Activated B cell treated with CpG ODN at 0.5 μM for 24 hours (primary cell): ENCODE measurements at regions of chr4 and their contacts with region 1.

Region 1: DNA sequence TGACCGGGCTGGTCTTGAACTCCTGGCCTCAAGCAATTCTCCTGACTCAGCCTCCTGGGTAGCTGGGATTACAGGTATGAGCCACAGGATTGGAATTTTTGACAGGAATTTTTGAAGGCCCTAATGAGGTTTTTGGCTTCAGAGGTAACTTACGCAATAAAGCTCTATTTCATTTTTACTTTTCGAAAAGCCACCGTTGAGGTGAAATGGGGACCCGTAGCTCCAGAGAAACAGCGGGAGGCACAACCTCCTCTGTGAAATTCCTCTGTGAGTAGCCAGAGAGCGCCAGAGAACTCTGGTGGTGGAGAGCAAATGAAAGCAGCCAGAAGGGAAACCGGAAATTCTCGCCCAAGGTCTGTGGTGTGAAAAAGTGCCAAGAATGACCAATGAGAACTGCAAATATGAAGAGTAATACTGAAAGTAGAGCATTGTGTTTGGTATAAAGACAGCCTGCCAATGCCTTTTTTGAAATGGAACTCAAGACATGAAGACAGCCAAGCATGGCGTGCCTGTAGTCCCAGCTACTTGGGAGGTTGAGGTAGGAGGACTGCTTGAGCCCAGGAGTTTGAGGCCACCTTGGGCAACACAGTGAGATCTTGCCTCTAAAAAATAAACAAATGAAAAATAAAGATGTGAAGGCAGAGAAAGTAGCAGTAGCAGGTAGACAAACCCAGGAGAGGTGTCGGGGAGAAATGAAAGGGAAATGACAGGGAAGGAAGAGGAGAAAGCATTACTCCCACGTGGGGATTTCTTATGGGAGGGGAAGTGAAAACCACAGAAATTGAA is 33.0 kb upstream of the TMEM131L start:
- DNase-seq: no peak
- ATAC-seq: peak; percentile 86
- H3K4me3 Mint-ChIP-seq: peak overlapping the region; percentile 80
- H3K27ac Mint-ChIP-seq: peak overlapping the region; percentile 93
- H3K4me1 Mint-ChIP-seq: peaks cover 71% of the 10 kb centered on the region
- H3K27me3 Mint-ChIP-seq: no peaks in the 10 kb centered on the region
- CTCF ChIP-seq: peak; percentile 35

Region 2: DNA sequence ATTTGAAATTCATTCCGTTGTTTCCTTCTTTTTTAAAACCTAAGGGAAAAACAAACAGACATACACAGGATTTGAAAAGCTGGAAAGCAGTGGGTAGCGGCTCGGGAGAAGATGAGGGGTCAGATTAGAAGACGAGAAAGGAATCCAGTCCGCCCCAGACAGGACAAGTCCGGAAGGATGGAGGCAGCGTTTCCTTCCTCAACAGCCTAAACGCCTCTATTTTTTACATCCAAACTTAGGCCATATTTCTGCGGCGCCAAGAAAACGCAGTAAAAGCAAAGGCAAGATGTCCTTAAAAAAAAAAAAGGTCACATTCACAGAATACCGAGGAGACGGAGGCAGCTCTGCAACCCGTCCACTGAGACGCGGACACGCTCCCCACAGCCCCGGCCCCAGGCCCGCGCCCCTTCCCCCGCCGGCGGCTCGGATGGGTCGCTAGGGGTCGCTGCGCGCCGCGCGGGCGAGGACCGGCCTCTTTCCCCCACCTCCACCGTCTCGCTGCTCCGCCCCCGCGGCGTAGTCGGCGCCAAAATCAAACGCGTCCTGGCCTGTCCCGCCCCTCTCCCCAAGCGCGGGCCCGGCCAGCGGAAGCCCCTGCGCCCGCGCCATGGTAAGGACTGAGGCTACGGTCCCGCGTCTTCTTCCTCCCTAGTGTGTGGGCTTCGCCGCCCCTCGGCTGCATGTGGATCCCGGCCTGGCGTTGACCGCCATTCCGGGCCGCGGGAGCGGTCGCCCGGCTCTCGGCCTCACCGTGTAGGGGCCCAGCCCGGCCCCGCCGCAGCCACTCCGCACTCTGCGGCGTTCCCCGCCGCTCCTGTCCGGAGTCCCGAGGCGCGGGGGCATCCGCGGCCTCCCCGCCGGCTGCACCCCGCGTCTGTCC is 88.8 kb before region 1 on chr4 and contains the start of gene MND1:
- CTCF ChIA-PET with region 1: interaction called, 4 read pairs
- POLR2A ChIA-PET with region 1: no interaction called
- intact Hi-C with region 1: loop called (anchors 1 kb)
- DNase-seq: peak; percentile 91
- ATAC-seq: peak; percentile 93
- H3K4me3 Mint-ChIP-seq: peak within 1 kb of the TSS; percentile 94
- H3K27ac Mint-ChIP-seq: no peak within 1 kb of the TSS
- H3K4me1 Mint-ChIP-seq: peaks cover 44% of the 10 kb centered on the region
- H3K27me3 Mint-ChIP-seq: no peaks in the 10 kb centered on the region
- CTCF ChIP-seq: peak; percentile 72
- total RNA-seq, gene MND1: 0.27 and 0.53 TPM in 2 replicates

Region 3: GRCh38 chr4:153488006-153488891 is 55.1 kb after region 1 on chr4:
- CTCF ChIA-PET with region 1: interaction called, 6 read pairs
- POLR2A ChIA-PET with region 1: interaction called, 7 read pairs
- intact Hi-C with region 1: loop called (anchors 1 kb)
- DNase-seq: peak; percentile 62
- ATAC-seq: peak; percentile 76
- H3K4me3 Mint-ChIP-seq: peak overlapping the region; percentile 78
- H3K27ac Mint-ChIP-seq: peak overlapping the region; percentile 92
- H3K4me1 Mint-ChIP-seq: peaks cover 89% of the 10 kb centered on the region
- H3K27me3 Mint-ChIP-seq: no peaks in the 10 kb centered on the region
- CTCF ChIP-seq: no peak

Region 4: DNA sequence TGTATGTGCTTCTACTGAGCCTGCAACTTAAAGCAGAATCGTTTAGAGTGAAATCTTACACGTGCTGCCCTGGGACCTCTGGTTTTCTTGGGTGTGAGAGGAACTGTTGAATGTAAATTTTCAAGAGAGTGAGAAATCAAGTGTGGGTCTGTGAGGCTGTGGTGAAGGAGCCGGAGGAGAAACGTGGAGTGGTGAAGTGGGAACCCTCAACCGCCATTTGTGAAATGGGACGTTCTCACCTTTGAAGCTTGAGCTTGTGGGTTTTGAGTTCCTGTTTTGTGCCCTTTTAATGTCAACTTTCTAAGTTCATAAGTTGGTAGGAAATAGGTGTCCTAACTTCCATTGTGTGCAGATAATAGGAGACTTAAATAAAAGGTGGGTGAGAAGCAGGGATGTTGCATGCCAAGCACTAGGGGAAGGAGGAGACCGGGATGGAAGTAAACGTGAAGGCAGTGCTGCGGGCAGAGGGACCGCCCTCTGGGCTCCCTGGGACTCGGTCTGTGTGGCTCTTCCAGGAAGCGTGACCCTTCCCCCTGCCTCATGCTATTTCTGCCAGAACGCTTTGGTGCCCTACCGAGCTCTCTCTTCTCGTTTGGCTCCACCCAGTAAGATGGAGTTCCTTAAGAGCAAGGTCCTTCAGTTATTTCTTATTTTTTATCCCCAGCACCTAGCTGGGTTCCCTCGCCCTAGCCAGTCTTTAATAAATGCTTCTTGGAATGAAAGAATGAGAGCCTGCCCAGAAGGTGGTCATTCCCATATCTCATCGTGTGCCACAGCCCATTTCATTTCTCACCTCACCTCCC is 89.0 kb after region 1 on chr4:
- CTCF ChIA-PET with region 1: interaction called, 6 read pairs
- POLR2A ChIA-PET with region 1: interaction called, 6 read pairs
- intact Hi-C with region 1: loop called (anchors 1 kb)
- DNase-seq: no peak
- ATAC-seq: peak; percentile 25
- H3K4me3 Mint-ChIP-seq: peak overlapping the region; percentile 71
- H3K27ac Mint-ChIP-seq: peak overlapping the region; percentile 90
- H3K4me1 Mint-ChIP-seq: peaks cover 99% of the 10 kb centered on the region
- H3K27me3 Mint-ChIP-seq: no peaks in the 10 kb centered on the region
- CTCF ChIP-seq: no peak

Region 5: GRCh38 chr4:153541456-153542096 is 108.4 kb after region 1 on chr4:
- CTCF ChIA-PET with region 1: interaction called, 4 read pairs
- POLR2A ChIA-PET with region 1: no interaction called
- intact Hi-C with region 1: loop called (anchors 1 kb)
- DNase-seq: no peak
- ATAC-seq: peak; percentile 21
- H3K4me3 Mint-ChIP-seq: no peak overlapping the region
- H3K27ac Mint-ChIP-seq: peak overlapping the region; percentile 11
- H3K4me1 Mint-ChIP-seq: peaks cover 85% of the 10 kb centered on the region
- H3K27me3 Mint-ChIP-seq: no peaks in the 10 kb centered on the region
- CTCF ChIP-seq: no peak

Region 6: DNA sequence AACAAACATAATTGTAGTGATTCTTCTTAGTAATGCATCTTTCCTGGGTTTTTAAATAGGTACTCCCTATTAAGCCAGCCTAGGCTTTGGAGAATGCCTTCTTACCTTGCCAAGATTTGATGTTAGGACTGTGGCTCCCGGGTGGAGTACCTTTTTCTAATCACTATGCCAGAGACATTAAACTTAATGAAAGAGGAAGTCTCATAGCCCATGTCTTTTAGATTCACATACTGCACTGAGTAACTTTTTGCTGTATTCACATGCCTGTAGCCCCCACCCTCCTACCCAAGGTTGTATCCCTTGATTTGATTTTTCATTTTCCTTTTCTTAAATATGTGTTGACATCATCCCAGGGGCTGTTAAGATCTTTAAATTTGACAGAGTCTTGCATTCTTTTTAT is 146.7 kb after region 1 on chr4:
- CTCF ChIA-PET with region 1: interaction called, 29 read pairs
- POLR2A ChIA-PET with region 1: interaction called, 3 read pairs
- intact Hi-C with region 1: no loop called
- DNase-seq: no peak
- ATAC-seq: peak; percentile 73
- H3K4me3 Mint-ChIP-seq: peak overlapping the region; percentile 36
- H3K27ac Mint-ChIP-seq: peak overlapping the region; percentile 59
- H3K4me1 Mint-ChIP-seq: peaks cover 71% of the 10 kb centered on the region
- H3K27me3 Mint-ChIP-seq: no peaks in the 10 kb centered on the region
- CTCF ChIP-seq: no peak